Activated CD4-positive, alpha-beta memory T cell treated with anti-CD3 and anti-CD28 coated beads for 36 hours (primary cell): ENCODE measurements at regions of chr6 and their contacts with region 1.

Region 1: GRCh38 chr6:16286148-16286522 is 47.7 kb downstream of the GMPR start:
- DNase-seq: peak; percentile 49
- H3K4me3 Mint-ChIP-seq: no peak overlapping the region
- H3K27ac Mint-ChIP-seq: no peak overlapping the region
- H3K4me1 Mint-ChIP-seq: no peaks in the 10 kb centered on the region
- H3K27me3 Mint-ChIP-seq: no peaks in the 10 kb centered on the region

Region 2: DNA sequence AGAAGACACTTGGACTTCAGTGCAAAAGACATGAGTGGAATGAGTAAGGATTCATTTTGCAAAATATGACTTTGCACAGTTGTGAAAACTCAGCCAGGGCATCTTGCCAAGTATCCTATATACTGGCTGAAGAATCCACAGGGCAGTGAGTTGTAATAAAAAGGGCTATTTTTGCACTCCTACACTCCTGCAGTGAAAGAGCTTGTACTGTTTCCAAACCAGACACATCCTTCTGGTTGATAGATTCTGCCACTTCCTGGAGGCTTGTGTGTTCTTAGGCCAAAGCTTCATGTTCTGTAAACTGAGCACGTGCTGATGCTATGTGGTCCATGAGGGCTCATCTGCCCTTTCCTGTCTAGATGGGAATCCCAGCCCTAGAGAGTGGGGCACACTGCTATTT is 12.9 kb before region 1 on chr6:
- CTCF ChIA-PET with region 1: interaction called, 14 read pairs
- POLR2A ChIA-PET with region 1: no interaction called
- intact Hi-C with region 1: no loop called
- DNase-seq: no peak
- H3K4me3 Mint-ChIP-seq: no peak overlapping the region
- H3K27ac Mint-ChIP-seq: no peak overlapping the region
- H3K4me1 Mint-ChIP-seq: no peaks in the 10 kb centered on the region
- H3K27me3 Mint-ChIP-seq: no peaks in the 10 kb centered on the region

Region 3: GRCh38 chr6:16964553-16965501 is 678.7 kb after region 1 on chr6:
- CTCF ChIA-PET with region 1: interaction called, 11 read pairs
- POLR2A ChIA-PET with region 1: no interaction called
- intact Hi-C with region 1: no loop called
- DNase-seq: peak; percentile 83
- H3K4me3 Mint-ChIP-seq: no peak overlapping the region
- H3K27ac Mint-ChIP-seq: no peak overlapping the region
- H3K4me1 Mint-ChIP-seq: peaks cover 14% of the 10 kb centered on the region
- H3K27me3 Mint-ChIP-seq: peaks cover 15% of the 10 kb centered on the region